ENCODE measurements at regions of chr1 and their contacts with region 1.

Region 1: GRCh38 chr1:180482425-180483275 is 19.7 kb downstream of the ACBD6 start:
- DNase-seq: peak; percentile 28
- H3K4me3 ChIP-seq: no peak overlapping the region
- H3K27ac ChIP-seq: no peak overlapping the region
- H3K4me1 ChIP-seq: no peaks in the 10 kb centered on the region
- H3K27me3 ChIP-seq: no peaks in the 10 kb centered on the region
- CTCF ChIP-seq: peak; percentile 67

Region 2: DNA sequence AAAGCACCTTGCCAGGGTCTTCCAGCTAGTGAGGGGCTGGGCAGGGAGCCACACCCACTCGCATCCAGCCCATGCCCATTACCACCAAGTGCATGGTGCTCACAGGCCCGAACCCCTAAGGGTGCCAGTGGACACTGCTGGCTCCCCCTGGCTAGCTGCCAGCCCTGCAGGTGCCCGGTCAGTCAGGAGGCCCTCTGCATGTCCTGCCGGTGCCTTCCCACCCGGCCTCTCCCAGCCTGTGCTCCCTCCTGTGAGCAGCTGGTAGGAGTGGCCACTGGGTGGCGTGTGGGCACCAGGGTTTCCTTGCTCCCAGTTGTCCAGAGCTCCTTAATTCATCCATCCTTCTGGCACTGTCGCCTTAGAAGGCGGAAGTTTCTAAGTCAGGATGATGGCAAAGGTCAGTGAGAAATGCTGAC is 294.6 kb before region 1 on chr1:
- intact Hi-C with region 1: loop called (anchors 5 kb)
- DNase-seq: peak; percentile 71
- H3K4me3 ChIP-seq: no peak overlapping the region
- H3K27ac ChIP-seq: no peak overlapping the region
- H3K4me1 ChIP-seq: no peaks in the 10 kb centered on the region
- H3K27me3 ChIP-seq: no peaks in the 10 kb centered on the region
- CTCF ChIP-seq: peak; percentile 44

Region 3: GRCh38 chr1:180252638-180253536 is 229.8 kb before region 1 on chr1:
- intact Hi-C with region 1: loop called (anchors 2 kb)
- DNase-seq: peak; percentile 86
- H3K4me3 ChIP-seq: no peak overlapping the region
- H3K27ac ChIP-seq: no peak overlapping the region
- H3K4me1 ChIP-seq: no peaks in the 10 kb centered on the region
- H3K27me3 ChIP-seq: peaks cover 6% of the 10 kb centered on the region
- CTCF ChIP-seq: peak; percentile 82

Region 4: DNA sequence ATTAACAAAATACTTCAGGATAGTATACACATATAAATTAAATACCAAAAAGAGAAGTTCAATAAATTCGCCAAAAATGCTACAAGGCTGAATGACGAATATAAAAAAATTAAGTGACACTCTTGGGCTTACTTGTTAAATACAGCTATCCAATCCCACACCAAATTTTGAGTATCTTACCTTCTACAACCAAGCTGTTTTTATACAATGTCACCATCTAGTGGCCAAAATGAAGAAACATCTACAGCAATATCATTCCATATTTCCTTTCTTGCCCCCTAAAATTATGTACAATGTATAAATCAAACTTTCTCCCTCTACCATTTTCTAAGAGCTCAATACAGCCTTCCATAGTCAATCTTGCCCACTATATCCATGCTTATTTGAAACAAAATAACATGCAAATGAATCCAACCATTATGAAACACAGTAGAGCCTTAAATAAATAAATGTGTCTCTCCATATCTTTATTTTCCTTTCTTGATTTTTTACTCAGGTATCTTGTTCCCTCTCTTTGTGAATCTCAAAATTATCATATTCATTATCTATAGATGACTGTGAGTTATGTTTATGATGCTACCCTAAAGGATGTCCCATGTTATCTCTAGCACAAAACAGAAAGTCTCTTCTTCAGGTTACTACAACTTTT is 66.5 kb before region 1 on chr1:
- intact Hi-C with region 1: loop called (anchors 5 kb)
- DNase-seq: no peak
- H3K4me3 ChIP-seq: no peak overlapping the region
- H3K27ac ChIP-seq: no peak overlapping the region
- H3K4me1 ChIP-seq: no peaks in the 10 kb centered on the region
- H3K27me3 ChIP-seq: no peaks in the 10 kb centered on the region
- CTCF ChIP-seq: peak; percentile 66

Region 5: DNA sequence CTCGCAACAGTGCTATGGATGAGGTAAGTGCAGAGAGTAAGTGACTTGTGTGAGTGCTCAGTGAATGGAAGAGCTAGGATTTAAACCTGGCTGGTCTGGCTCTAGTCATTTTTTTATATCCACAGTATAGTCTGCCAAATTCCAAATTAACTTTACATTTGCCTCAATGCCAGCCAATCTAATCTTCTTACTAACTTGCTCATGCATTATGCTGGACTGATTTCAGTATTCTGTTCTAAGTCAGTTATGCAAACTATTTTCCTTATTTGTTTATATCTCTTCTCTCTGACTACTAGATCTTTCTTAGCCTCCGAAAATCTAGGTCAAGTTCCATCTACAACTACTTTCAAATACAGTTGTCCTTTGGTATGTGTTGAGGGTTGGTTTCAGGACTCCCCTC is 282.5 kb after region 1 on chr1:
- intact Hi-C with region 1: no loop called
- DNase-seq: no peak
- H3K4me3 ChIP-seq: no peak overlapping the region
- H3K27ac ChIP-seq: no peak overlapping the region
- H3K4me1 ChIP-seq: no peaks in the 10 kb centered on the region
- H3K27me3 ChIP-seq: no peaks in the 10 kb centered on the region
- CTCF ChIP-seq: no peak

Region 6: DNA sequence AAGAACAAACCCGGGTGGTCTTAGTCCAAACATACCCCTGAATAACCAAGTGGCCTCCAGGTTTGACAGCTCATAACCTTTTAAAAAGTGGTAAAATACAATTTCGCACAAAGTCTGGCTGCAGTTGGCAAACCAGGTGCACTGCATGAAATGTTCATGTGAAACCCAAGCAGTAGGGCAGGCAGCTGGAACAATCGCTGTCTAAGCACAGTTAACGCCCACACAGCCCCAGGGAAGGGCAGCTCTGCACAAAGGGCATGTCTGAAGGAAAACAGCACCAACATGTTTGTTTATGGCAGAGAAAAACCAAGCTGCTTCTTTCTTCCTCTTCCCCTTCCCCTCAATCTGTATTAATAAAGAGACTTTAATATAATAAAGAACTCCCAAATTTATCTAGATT is 479.5 kb after region 1 on chr1:
- intact Hi-C with region 1: no loop called
- DNase-seq: no peak
- H3K4me3 ChIP-seq: no peak overlapping the region
- H3K27ac ChIP-seq: no peak overlapping the region
- H3K4me1 ChIP-seq: no peaks in the 10 kb centered on the region
- H3K27me3 ChIP-seq: no peaks in the 10 kb centered on the region
- CTCF ChIP-seq: no peak

Measured in colonic mucosa (tissue), 4 donors.